GM12878 (cell line): ENCODE measurements at regions of chr3 and their contacts with region 1.

Region 1: GRCh38 chr3:186247821-186248814 is 113.9 kb downstream of the DGKG start:
- DNase-seq: no peak
- ATAC-seq: peak; percentile 49
- H3K4me3 ChIP-seq: no peak overlapping the region
- H3K27ac ChIP-seq: no peak overlapping the region
- H3K4me1 ChIP-seq: peaks cover 8% of the 10 kb centered on the region
- H3K27me3 ChIP-seq: no peaks in the 10 kb centered on the region
- CTCF ChIP-seq: no peak
- EP300 ChIP-seq: no peak
- POLR2A ChIP-seq: no peak
- RAD21 ChIP-seq: no peak

Region 2: GRCh38 chr3:185976977-185977678 is 271.0 kb before region 1 on chr3:
- CTCF ChIA-PET with region 1: interaction called, 87 read pairs
- POLR2A ChIA-PET with region 1: no interaction called
- RAD21 ChIA-PET with region 1: interaction called, 38 read pairs
- SMC1A ChIA-PET with region 1: interaction called, 5 read pairs
- in situ Hi-C with region 1: loop called (anchors 5 kb)
- intact Hi-C with region 1: no loop called
- DNase-seq: peak; percentile 42
- ATAC-seq: peak; percentile 100
- H3K4me3 ChIP-seq: no peak overlapping the region
- H3K27ac ChIP-seq: no peak overlapping the region
- H3K4me1 ChIP-seq: peaks cover 4% of the 10 kb centered on the region; the same call in 1 of the 2 replicates
- H3K27me3 ChIP-seq: no peaks in the 10 kb centered on the region
- CTCF ChIP-seq: peak; percentile 85 to 93 (median 90)
- EP300 ChIP-seq: no peak
- POLR2A ChIP-seq: no peak
- RAD21 ChIP-seq: peak; percentile 76

Region 3: GRCh38 chr3:186277268-186277909 is 29.3 kb after region 1 on chr3:
- CTCF ChIA-PET with region 1: no interaction called
- POLR2A ChIA-PET with region 1: no interaction called
- RAD21 ChIA-PET with region 1: no interaction called
- SMC1A ChIA-PET with region 1: no interaction called
- in situ Hi-C with region 1: no loop called
- intact Hi-C with region 1: no loop called
- DNase-seq: no peak
- ATAC-seq: no peak
- H3K4me3 ChIP-seq: no peak overlapping the region
- H3K27ac ChIP-seq: no peak overlapping the region
- H3K4me1 ChIP-seq: no peaks in the 10 kb centered on the region; the same call in 1 of the 2 replicates
- H3K27me3 ChIP-seq: peaks cover 0 to 3% of the 10 kb centered on the region in 2 experiments; a peak in 2 of 4 replicates
- CTCF ChIP-seq: no peak
- EP300 ChIP-seq: no peak
- POLR2A ChIP-seq: no peak
- RAD21 ChIP-seq: no peak